ENCODE measurements at regions of chr14 and their contacts with region 1.

Region 1: GRCh38 chr14:20332788-20333493 is at the start of gene CCNB1IP1:
- DNase-seq: peak in 4 of 5 donors; percentile 57 to 78 (median 66)
- ATAC-seq: peak; percentile 98 to 99 (median 99)
- H3K4me3 ChIP-seq: peak within 1 kb of the TSS; percentile 17 to 75 (median 68)
- H3K27ac ChIP-seq: peak within 1 kb of the TSS; percentile 59 to 94 (median 88)
- H3K4me1 ChIP-seq: peaks cover 0 to 26% (median 15%) of the 10 kb centered on the region in 12 donors
- H3K27me3 ChIP-seq: no peaks in the 10 kb centered on the region
- CTCF ChIP-seq: no peak
- POLR2A ChIP-seq: no peak
- total RNA-seq, gene CCNB1IP1: 24.5 to 85.6 (median 53.0) TPM

Region 2: GRCh38 chr14:20454516-20455354 is 121.8 kb after region 1 on chr14 and contains the starts of genes APEX1 and OSGEP:
- intact Hi-C with region 1: loop called in 2 of 10 experiments (anchors 5 to 10 kb)
- DNase-seq: peak; percentile 98 to 99 (median 99)
- ATAC-seq: peak; percentile 95 to 97 (median 96)
- H3K4me3 ChIP-seq: peak within 1 kb of the TSS; percentile 71 to 92 (median 81)
- H3K27ac ChIP-seq: peak within 1 kb of the TSS; percentile 88 to 98 (median 93)
- H3K4me1 ChIP-seq: peaks cover 0 to 53% (median 26%) of the 10 kb centered on the region in 12 donors
- H3K27me3 ChIP-seq: no peaks in the 10 kb centered on the region
- CTCF ChIP-seq: peak in 1 of 12 donors; percentile 6
- POLR2A ChIP-seq: peak in 1 of 2 donors; percentile 89
- total RNA-seq, gene APEX1: 60.4 to 92.6 (median 76.4) TPM
- total RNA-seq, gene OSGEP: 16.1 to 40.9 (median 18.5) TPM

Measured in heart left ventricle (tissue), 16 donors.